ENCODE measurements at regions of chr9 and their contacts with region 1.

Region 1: DNA sequence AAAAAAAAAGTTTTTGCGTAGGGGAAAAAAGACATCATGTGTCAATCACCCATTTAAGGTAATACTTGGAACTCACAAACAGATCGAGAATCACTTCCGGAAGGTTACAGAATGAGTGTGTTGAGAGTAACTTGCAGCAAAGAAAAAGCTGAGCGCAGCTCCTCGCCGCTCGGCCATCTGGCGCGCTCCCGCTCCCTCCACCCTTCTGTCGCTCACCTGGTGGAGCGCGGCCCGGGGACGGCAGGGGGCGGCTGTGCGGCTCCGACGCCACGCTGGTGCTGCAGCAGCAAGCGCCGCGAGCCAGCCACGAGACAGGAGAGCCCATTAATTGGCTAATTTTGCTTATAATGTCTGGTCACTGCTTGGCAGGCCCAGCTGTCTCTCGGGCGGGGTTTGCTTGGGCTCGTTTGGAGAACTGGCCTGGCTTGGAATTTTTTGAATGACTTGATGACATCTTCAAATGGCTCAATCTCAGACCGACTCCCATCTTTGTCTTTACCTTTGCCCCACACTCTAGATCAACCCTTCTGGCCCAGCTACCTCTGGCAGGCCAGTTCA is 601.8 kb downstream of the CCDC171 start:
- DNase-seq: no peak
- H3K4me3 ChIP-seq: no peak overlapping the region
- H3K27ac ChIP-seq: no peak overlapping the region
- H3K4me1 ChIP-seq: no peaks in the 10 kb centered on the region
- H3K27me3 ChIP-seq: peaks cover 2% of the 10 kb centered on the region
- CTCF ChIP-seq: peak in 1 of 2 donors; percentile 25

Region 2: GRCh38 chr9:16191691-16192402 is 37.2 kb after region 1 on chr9:
- CTCF ChIA-PET with region 1: no interaction called
- dilution Hi-C with region 1: no loop called
- in situ Hi-C with region 1: no loop called
- intact Hi-C with region 1: no loop called
- DNase-seq: peak; percentile 35
- H3K4me3 ChIP-seq: no peak overlapping the region
- H3K27ac ChIP-seq: no peak overlapping the region
- H3K4me1 ChIP-seq: peaks cover 6% of the 10 kb centered on the region
- H3K27me3 ChIP-seq: no peaks in the 10 kb centered on the region
- CTCF ChIP-seq: peak; percentile 61 to 88

Region 3: DNA sequence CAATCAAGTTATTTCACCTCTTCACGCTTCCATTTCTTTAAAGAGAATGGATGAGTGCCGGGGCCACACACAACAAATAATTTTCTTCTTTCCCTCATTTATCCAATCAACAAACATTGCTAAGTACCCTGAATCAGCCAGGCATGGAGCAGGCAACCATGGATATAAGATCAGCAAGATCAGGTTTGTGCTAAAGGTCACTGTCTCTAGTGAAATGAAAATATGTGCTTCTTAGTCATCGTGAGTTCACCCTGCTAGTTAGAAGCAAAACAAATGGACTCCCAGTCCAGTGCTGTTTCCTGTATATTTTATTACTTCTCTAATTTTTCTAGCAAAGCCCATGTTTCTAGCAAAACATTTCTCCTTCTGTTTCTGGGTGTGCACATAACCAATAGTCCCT is 86.6 kb after region 1 on chr9:
- CTCF ChIA-PET with region 1: no interaction called
- dilution Hi-C with region 1: loop called (anchors 5 kb)
- in situ Hi-C with region 1: no loop called
- intact Hi-C with region 1: no loop called
- DNase-seq: no peak
- H3K4me3 ChIP-seq: no peak overlapping the region
- H3K27ac ChIP-seq: no peak overlapping the region
- H3K4me1 ChIP-seq: no peaks in the 10 kb centered on the region
- H3K27me3 ChIP-seq: no peaks in the 10 kb centered on the region
- CTCF ChIP-seq: no peak

Measured in mammary epithelial cell (primary cell).